ENCODE measurements at regions of chr18 and their contacts with region 1.

Region 1: DNA sequence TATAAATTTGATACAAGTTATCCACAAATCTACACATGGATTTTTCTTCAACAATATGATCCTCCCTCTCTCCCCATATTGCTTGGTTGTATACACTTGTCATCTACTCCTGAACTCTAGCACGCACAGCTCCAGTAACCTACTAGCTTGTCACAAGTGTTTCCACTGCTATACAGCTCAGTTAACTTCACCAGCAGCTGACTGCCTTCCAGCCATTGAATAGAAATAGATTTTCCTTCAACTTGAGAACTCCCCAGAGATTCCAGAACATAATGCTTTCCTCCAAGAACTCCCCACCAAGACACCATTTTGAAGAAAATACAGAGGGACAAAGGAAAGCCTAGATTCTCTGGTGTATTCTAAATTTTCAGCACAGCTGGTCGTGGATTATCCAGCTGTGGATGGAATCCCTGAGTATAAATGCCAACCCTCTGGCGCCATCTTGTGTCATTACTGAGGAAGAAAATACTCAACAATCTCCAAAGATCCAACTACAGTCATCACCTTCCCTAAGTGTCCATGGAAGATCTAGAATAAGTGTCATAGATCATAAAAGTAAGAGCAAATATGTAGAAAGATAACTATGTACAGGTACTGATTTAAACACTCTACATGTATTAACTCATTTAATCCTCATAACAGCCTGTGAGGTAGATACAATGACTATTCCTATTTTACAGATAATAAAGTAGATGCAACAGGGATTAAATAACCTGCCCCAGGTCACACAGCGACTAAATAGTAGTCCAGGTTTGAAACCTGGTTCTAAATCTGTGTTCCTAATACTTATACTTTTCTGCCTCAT is 156.7 kb downstream of the ARHGAP28 start:
- DNase-seq: peak; percentile 57 to 80 (median 66)
- ATAC-seq: peak; percentile 90
- H3K4me3 ChIP-seq: no peak overlapping the region
- H3K27ac ChIP-seq: no peak overlapping the region
- H3K4me1 ChIP-seq: peaks cover 0 to 4% of the 10 kb centered on the region in 2 experiments; a peak in 1 of 5 replicates
- H3K27me3 ChIP-seq: no peaks in the 10 kb centered on the region
- CTCF ChIP-seq: peak; percentile 70 to 89 (median 80)
- EP300 ChIP-seq: no peak
- POLR2A ChIP-seq: no peak
- RAD21 ChIP-seq: peak; percentile 94 to 95

Region 2: GRCh38 chr18:5868218-5869115 is 1017.7 kb before region 1 on chr18:
- CTCF ChIA-PET with region 1: no interaction called
- POLR2A ChIA-PET with region 1: no interaction called
- in situ Hi-C with region 1: loop called (anchors 10 kb)
- intact Hi-C with region 1: loop called (anchors 5 kb)
- DNase-seq: peak; percentile 42 to 81 (median 55)
- ATAC-seq: peak; percentile 93
- H3K4me3 ChIP-seq: no peak overlapping the region
- H3K27ac ChIP-seq: no peak overlapping the region
- H3K4me1 ChIP-seq: no peaks in the 10 kb centered on the region
- H3K27me3 ChIP-seq: no peaks in the 10 kb centered on the region
- CTCF ChIP-seq: peak; percentile 63 to 72 (median 66)
- EP300 ChIP-seq: no peak
- POLR2A ChIP-seq: no peak
- RAD21 ChIP-seq: peak; percentile 41 to 73; a peak in 3 of 4 replicates

Region 3: GRCh38 chr18:6537475-6537874 is 348.7 kb before region 1 on chr18:
- CTCF ChIA-PET with region 1: interaction called, 41 read pairs
- POLR2A ChIA-PET with region 1: no interaction called
- in situ Hi-C with region 1: loop called (anchors 10 kb)
- intact Hi-C with region 1: no loop called
- DNase-seq: no peak
- ATAC-seq: no peak
- H3K4me3 ChIP-seq: no peak overlapping the region
- H3K27ac ChIP-seq: no peak overlapping the region
- H3K4me1 ChIP-seq: no peaks in the 10 kb centered on the region
- H3K27me3 ChIP-seq: no peaks in the 10 kb centered on the region
- CTCF ChIP-seq: no peak
- EP300 ChIP-seq: no peak
- POLR2A ChIP-seq: no peak
- RAD21 ChIP-seq: no peak

Region 4: GRCh38 chr18:6605115-6605869 is 280.9 kb before region 1 on chr18:
- CTCF ChIA-PET with region 1: no interaction called
- POLR2A ChIA-PET with region 1: interaction called, 3 read pairs
- in situ Hi-C with region 1: no loop called
- intact Hi-C with region 1: loop called (anchors 5 kb)
- DNase-seq: no peak
- ATAC-seq: no peak
- H3K4me3 ChIP-seq: no peak overlapping the region
- H3K27ac ChIP-seq: no peak overlapping the region
- H3K4me1 ChIP-seq: no peaks in the 10 kb centered on the region
- H3K27me3 ChIP-seq: peaks cover 0 to 5% of the 10 kb centered on the region in 2 experiments; a peak in 1 of 5 replicates
- CTCF ChIP-seq: no peak
- EP300 ChIP-seq: no peak
- POLR2A ChIP-seq: no peak
- RAD21 ChIP-seq: no peak

Region 5: GRCh38 chr18:6729247-6730091 is 156.7 kb before region 1 on chr18 and contains the start of gene ARHGAP28:
- CTCF ChIA-PET with region 1: no interaction called
- POLR2A ChIA-PET with region 1: no interaction called
- in situ Hi-C with region 1: no loop called
- intact Hi-C with region 1: loop called (anchors 5 kb)
- DNase-seq: peak; percentile 88 to 91 (median 91)
- ATAC-seq: peak; percentile 97
- H3K4me3 ChIP-seq: peak within 1 kb of the TSS; percentile 61
- H3K27ac ChIP-seq: peak within 1 kb of the TSS; percentile 56
- H3K4me1 ChIP-seq: peaks cover 3 to 11% of the 10 kb centered on the region in 2 experiments; a peak in 3 of 5 replicates
- H3K27me3 ChIP-seq: no peaks in the 10 kb centered on the region
- CTCF ChIP-seq: peak; percentile 45 to 74 (median 60); a peak in 5 of 6 replicates
- EP300 ChIP-seq: no peak
- POLR2A ChIP-seq: peak; percentile 61
- RAD21 ChIP-seq: peak; percentile 18 to 50; a peak in 3 of 4 replicates
- polyA plus RNA-seq, gene ARHGAP28: 0.93 to 2.6 TPM

Region 6: GRCh38 chr18:6948281-6949055 is 62.3 kb after region 1 on chr18:
- CTCF ChIA-PET with region 1: no interaction called
- POLR2A ChIA-PET with region 1: no interaction called
- in situ Hi-C with region 1: no loop called
- intact Hi-C with region 1: no loop called
- DNase-seq: no peak
- ATAC-seq: peak; percentile 30; the same call in 1 of the 3 replicates
- H3K4me3 ChIP-seq: no peak overlapping the region
- H3K27ac ChIP-seq: no peak overlapping the region
- H3K4me1 ChIP-seq: no peaks in the 10 kb centered on the region; a peak in 1 of 5 replicates
- H3K27me3 ChIP-seq: peaks cover 51 to 68% of the 10 kb centered on the region in 2 experiments
- CTCF ChIP-seq: no peak
- EP300 ChIP-seq: no peak
- POLR2A ChIP-seq: no peak
- RAD21 ChIP-seq: no peak

Measured in K562 (cell line).